H1 (cell line): ENCODE measurements at regions of chr22 and their contacts with region 1.

Region 1: GRCh38 chr22:43346521-43346929 is 3.4 kb upstream of the SCUBE1 start:
- DNase-seq: peak; percentile 56 to 87
- H3K4me3 ChIP-seq: no peak overlapping the region
- H3K27ac ChIP-seq: no peak overlapping the region
- H3K4me1 ChIP-seq: peaks cover 0 to 2% (median under 1%) of the 10 kb centered on the region in 4 experiments; a peak in 2 of 7 replicates
- H3K27me3 ChIP-seq: peaks cover 18 to 37% (median 33%) of the 10 kb centered on the region in 4 experiments
- CTCF ChIP-seq: peak; percentile 80 to 88 (median 87)
- EP300 ChIP-seq: no peak
- POLR2A ChIP-seq: no peak
- RAD21 ChIP-seq: peak; percentile 74 to 85

Region 2: GRCh38 chr22:43230971-43231723 is 115.4 kb before region 1 on chr22:
- CTCF ChIA-PET with region 1: interaction called, 59 read pairs
- POLR2A ChIA-PET with region 1: no interaction called
- DNase-seq: peak; percentile 66 to 92
- H3K4me3 ChIP-seq: peak overlapping the region in 3 of 4 experiments; percentile 40 to 54 (median 52); a peak in 6 of 8 replicates
- H3K27ac ChIP-seq: no peak overlapping the region
- H3K4me1 ChIP-seq: peaks cover 0 to 19% (median 13%) of the 10 kb centered on the region in 4 experiments; a peak in 6 of 7 replicates
- H3K27me3 ChIP-seq: no peaks in the 10 kb centered on the region
- CTCF ChIP-seq: peak; percentile 88 to 94 (median 89)
- EP300 ChIP-seq: no peak
- POLR2A ChIP-seq: no peak
- RAD21 ChIP-seq: peak; percentile 84 to 88

Region 3: DNA sequence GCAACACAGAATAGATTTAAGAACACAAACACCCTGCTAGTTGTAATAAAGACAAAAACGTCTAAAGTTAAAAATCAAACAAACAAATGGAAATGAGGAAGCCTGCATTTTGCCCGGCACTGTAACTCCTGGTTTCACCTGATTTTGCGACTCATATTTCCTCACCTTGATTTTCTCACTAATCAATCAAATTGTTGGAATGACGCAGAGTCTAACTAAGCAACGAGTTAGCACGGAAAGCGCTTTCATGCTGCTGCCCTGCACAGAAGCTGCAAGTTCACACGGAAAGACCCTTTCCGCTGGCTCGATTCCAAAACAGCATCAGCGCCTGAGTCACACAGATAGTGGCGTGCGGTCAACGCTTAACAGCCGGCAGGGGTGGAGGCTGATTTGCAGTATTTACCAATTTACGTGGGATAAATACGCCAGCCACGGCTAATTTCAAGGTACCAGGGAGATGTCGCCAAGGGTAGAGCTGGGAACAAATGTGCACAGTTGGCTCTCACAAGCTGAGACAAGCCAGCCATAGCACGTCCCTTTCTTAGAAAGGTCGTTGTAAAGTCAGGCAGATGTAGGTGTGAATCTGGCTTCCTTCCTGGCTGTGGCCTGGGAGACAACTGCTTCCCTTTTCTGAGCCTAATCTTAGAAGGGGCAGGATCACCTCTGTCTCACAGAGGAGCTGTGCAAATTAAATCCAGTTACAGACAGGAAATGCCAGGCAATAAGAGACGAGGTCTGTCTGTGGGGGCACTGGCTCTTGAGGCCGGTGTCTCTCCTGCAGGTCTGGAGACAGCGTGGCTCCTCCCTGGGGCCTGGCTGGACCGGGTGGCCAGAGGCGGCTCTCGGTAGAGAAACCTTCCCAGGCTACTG is 82.6 kb before region 1 on chr22:
- CTCF ChIA-PET with region 1: interaction called, 335 read pairs
- POLR2A ChIA-PET with region 1: no interaction called
- DNase-seq: no peak
- H3K4me3 ChIP-seq: no peak overlapping the region
- H3K27ac ChIP-seq: no peak overlapping the region
- H3K4me1 ChIP-seq: peaks cover 0 to 2% (median under 1%) of the 10 kb centered on the region in 4 experiments; a peak in 2 of 7 replicates
- H3K27me3 ChIP-seq: no peaks in the 10 kb centered on the region
- CTCF ChIP-seq: no peak
- EP300 ChIP-seq: no peak
- POLR2A ChIP-seq: no peak
- RAD21 ChIP-seq: no peak

Region 4: DNA sequence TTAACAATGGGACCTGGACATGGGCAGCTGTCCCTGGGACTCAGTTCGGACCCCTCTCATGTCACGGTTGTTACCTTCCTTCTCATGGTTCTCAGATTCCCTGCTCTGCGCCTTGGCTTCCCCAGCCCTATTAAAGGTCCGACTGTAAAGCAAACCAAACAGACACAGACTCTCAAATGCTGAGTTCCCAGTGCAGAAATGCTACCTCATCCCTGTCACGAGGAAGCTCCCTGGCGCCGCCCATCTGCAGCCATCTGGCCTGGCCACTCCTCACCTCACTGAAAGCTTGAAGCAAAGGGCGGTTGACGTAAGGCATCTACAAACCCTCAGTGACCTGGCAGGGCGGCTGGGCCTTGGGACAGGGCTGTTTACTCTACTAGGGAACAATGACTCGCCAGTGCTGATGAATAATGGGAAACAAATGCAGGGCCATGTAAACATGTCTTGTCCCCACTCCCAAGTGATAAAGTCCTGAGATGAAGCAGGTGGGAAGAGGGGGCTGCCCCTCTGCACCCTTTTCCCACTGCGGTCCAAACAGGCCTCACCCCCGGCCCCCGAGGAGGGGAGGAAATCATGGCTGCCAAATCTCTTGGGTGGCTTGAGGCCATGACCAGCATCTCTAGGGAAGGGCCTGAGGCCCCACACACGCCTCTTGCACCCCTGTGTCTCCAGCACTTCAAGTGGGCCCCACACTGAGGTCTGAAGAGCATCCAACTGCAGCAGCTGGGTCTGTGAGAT is 52.7 kb before region 1 on chr22:
- CTCF ChIA-PET with region 1: interaction called, 49 read pairs
- POLR2A ChIA-PET with region 1: interaction called, 3 read pairs
- DNase-seq: no peak
- H3K4me3 ChIP-seq: no peak overlapping the region
- H3K27ac ChIP-seq: no peak overlapping the region
- H3K4me1 ChIP-seq: peaks cover 0 to 4% (median under 1%) of the 10 kb centered on the region in 4 experiments; a peak in 4 of 7 replicates
- H3K27me3 ChIP-seq: no peaks in the 10 kb centered on the region
- CTCF ChIP-seq: no peak
- EP300 ChIP-seq: no peak
- POLR2A ChIP-seq: no peak
- RAD21 ChIP-seq: no peak

Region 5: GRCh38 chr22:43319661-43320486 is 26.7 kb before region 1 on chr22:
- CTCF ChIA-PET with region 1: interaction called, 13 read pairs
- POLR2A ChIA-PET with region 1: interaction called, 4 read pairs
- DNase-seq: no peak
- H3K4me3 ChIP-seq: no peak overlapping the region
- H3K27ac ChIP-seq: no peak overlapping the region
- H3K4me1 ChIP-seq: peaks cover 0 to 4% (median 0%) of the 10 kb centered on the region in 4 experiments; a peak in 2 of 7 replicates
- H3K27me3 ChIP-seq: no peaks in the 10 kb centered on the region; a peak in 1 of 7 replicates
- CTCF ChIP-seq: no peak
- EP300 ChIP-seq: no peak
- POLR2A ChIP-seq: no peak
- RAD21 ChIP-seq: no peak

Region 6: GRCh38 chr22:43331698-43332097 is 14.8 kb before region 1 on chr22:
- CTCF ChIA-PET with region 1: interaction called, 31 read pairs
- POLR2A ChIA-PET with region 1: no interaction called
- DNase-seq: no peak
- H3K4me3 ChIP-seq: no peak overlapping the region
- H3K27ac ChIP-seq: no peak overlapping the region
- H3K4me1 ChIP-seq: peaks cover 0 to 7% (median 3%) of the 10 kb centered on the region in 4 experiments; a peak in 2 of 7 replicates
- H3K27me3 ChIP-seq: no peaks in the 10 kb centered on the region
- CTCF ChIP-seq: no peak
- EP300 ChIP-seq: no peak
- POLR2A ChIP-seq: no peak
- RAD21 ChIP-seq: no peak

Region 7: DNA sequence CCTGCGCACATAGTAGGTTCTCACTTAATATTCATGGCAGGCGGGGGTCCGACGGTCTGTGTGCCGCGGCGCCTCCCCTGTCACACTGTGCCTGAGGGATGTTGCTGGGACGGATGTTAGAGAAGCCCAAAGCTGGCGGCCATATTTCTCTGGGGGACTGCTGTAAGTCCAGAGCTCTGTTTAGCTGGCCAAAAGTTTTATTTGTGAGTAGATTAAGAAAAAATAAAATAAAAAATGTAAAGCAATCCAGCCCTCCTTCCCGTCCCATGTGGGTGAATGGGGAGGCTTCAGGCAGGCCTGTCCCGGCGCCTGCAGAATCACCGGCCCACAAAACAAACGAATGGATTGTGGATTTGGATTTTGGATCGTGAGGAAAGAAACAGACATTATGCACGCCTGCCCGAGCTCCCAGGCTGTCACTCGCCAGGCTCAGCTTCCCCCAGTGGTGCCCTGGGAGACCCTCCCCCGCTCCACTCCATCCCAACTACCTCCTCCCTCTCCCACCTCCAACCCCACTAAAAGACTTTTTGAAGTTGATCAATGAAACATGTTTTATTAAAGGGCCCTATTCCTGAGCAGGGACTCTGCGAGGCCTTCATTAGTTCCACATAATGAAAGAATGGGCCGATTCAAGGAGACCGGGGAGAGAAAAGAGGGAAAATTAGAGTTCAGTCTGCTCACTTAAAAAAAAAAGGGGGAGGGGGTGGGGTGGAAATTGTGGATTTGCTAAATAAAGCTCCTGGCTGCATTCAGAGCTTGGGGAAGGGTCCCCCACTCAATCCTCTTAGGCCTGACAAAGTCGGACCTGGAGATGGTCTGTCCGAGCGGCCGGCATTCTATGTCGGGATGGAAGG is 17.0 kb after region 1 on chr22:
- CTCF ChIA-PET with region 1: interaction called, 38 read pairs
- POLR2A ChIA-PET with region 1: no interaction called
- DNase-seq: no peak
- H3K4me3 ChIP-seq: no peak overlapping the region
- H3K27ac ChIP-seq: no peak overlapping the region
- H3K4me1 ChIP-seq: peaks cover 0 to 4% (median under 1%) of the 10 kb centered on the region in 4 experiments; a peak in 4 of 7 replicates
- H3K27me3 ChIP-seq: no peaks in the 10 kb centered on the region
- CTCF ChIP-seq: no peak
- EP300 ChIP-seq: no peak
- POLR2A ChIP-seq: no peak
- RAD21 ChIP-seq: no peak

Region 8: GRCh38 chr22:43413826-43414225 is 67.3 kb after region 1 on chr22:
- CTCF ChIA-PET with region 1: no interaction called
- POLR2A ChIA-PET with region 1: no interaction called
- DNase-seq: no peak
- H3K4me3 ChIP-seq: no peak overlapping the region
- H3K27ac ChIP-seq: no peak overlapping the region
- H3K4me1 ChIP-seq: peaks cover 0 to 5% (median 2%) of the 10 kb centered on the region in 4 experiments; a peak in 6 of 7 replicates
- H3K27me3 ChIP-seq: peaks cover 14 to 46% (median 37%) of the 10 kb centered on the region in 4 experiments
- CTCF ChIP-seq: no peak
- EP300 ChIP-seq: no peak
- POLR2A ChIP-seq: no peak
- RAD21 ChIP-seq: no peak

Region 9: GRCh38 chr22:43451371-43452050 is 105.0 kb after region 1 on chr22:
- CTCF ChIA-PET with region 1: no interaction called
- POLR2A ChIA-PET with region 1: no interaction called
- DNase-seq: no peak
- H3K4me3 ChIP-seq: no peak overlapping the region
- H3K27ac ChIP-seq: no peak overlapping the region
- H3K4me1 ChIP-seq: no peaks in the 10 kb centered on the region
- H3K27me3 ChIP-seq: no peaks in the 10 kb centered on the region
- CTCF ChIP-seq: no peak
- EP300 ChIP-seq: no peak
- POLR2A ChIP-seq: no peak
- RAD21 ChIP-seq: no peak